GM10248 (cell line): ENCODE measurements at regions of chr9 and their contacts with region 1.

Region 1: DNA sequence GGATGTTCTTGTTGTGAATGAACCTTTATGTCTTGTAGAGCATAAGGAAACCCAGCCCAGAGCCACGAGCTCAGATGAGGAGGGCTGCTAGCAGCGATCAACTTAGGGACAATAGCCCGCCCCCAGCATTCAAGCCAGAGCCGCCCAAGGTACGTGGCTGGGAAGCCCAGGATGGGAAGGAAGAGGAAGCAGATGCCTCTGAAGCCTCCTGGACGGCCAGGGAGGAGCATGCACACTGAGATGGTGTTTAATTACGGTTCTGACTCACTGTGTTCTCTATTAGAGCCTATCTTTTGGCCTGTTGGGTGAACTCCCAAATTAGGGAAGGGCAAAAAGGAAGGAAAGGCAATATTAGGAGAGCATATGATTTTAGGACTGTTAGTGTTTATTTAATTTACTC is 75.3 kb downstream of the TJP2 start:
- DNase-seq: no peak
- CTCF ChIP-seq: no peak

Region 2: DNA sequence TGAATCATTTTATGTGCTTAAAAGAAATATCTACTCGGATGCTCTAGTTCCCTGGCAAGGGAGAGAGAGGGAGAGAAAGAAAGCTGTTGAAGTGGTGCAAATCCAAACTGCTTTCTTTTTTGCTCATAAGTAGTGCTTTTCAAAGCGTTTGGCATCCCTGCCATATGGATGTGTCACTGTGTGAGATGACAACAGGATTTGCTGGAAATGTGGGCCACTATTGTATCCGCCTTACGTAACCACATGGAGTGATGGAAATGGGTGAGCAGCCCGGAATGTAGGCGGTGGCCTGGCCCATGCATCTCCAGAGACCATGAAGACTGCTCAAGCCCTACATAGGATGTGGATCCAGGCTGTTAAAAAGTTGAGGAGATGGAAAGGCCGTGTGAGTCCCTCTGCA is 44.5 kb before region 1 on chr9:
- CTCF ChIA-PET with region 1: no interaction called
- POLR2A ChIA-PET with region 1: no interaction called
- DNase-seq: no peak
- CTCF ChIP-seq: no peak

Region 3: GRCh38 chr9:69223605-69224004 is 25.7 kb before region 1 on chr9:
- CTCF ChIA-PET with region 1: interaction called, 12 read pairs
- POLR2A ChIA-PET with region 1: no interaction called
- DNase-seq: peak; percentile 30
- CTCF ChIP-seq: peak; percentile 52

Region 4: GRCh38 chr9:69237702-69238295 is 11.5 kb before region 1 on chr9:
- CTCF ChIA-PET with region 1: interaction called, 14 read pairs
- POLR2A ChIA-PET with region 1: no interaction called
- DNase-seq: no peak
- CTCF ChIP-seq: no peak